ENCODE measurements at regions of chr17 and their contacts with region 1.

Region 1: GRCh38 chr17:29124117-29124924 is 55.9 kb downstream of the MYO18A start:
- DNase-seq: no peak
- ATAC-seq: peak; percentile 97
- H3K4me3 ChIP-seq: no peak overlapping the region
- H3K27ac ChIP-seq: no peak overlapping the region
- H3K4me1 ChIP-seq: no peaks in the 10 kb centered on the region
- H3K27me3 ChIP-seq: no peaks in the 10 kb centered on the region
- CTCF ChIP-seq: peak; percentile 71 to 97 (median 72); a peak in 5 of 6 replicates
- EP300 ChIP-seq: no peak
- POLR2A ChIP-seq: no peak
- RAD21 ChIP-seq: peak; percentile 86

Region 2: GRCh38 chr17:28960256-28961061 is 163.9 kb before region 1 on chr17:
- CTCF ChIA-PET with region 1: interaction called, 415 read pairs
- POLR2A ChIA-PET with region 1: no interaction called
- RAD21 ChIA-PET with region 1: interaction called, 10 read pairs
- SMC1A ChIA-PET with region 1: interaction called, 4 read pairs
- in situ Hi-C with region 1: loop called (anchors 5 kb)
- intact Hi-C with region 1: no loop called
- DNase-seq: no peak
- ATAC-seq: no peak
- H3K4me3 ChIP-seq: no peak overlapping the region
- H3K27ac ChIP-seq: no peak overlapping the region
- H3K4me1 ChIP-seq: no peaks in the 10 kb centered on the region
- H3K27me3 ChIP-seq: peaks cover 0 to 2% of the 10 kb centered on the region in 2 experiments; a peak in 1 of 4 replicates
- CTCF ChIP-seq: no peak
- EP300 ChIP-seq: no peak
- POLR2A ChIP-seq: no peak
- RAD21 ChIP-seq: no peak

Region 3: GRCh38 chr17:29140051-29140621 is 15.8 kb after region 1 on chr17:
- CTCF ChIA-PET with region 1: interaction called, 371 read pairs
- POLR2A ChIA-PET with region 1: interaction called, 4 read pairs
- RAD21 ChIA-PET with region 1: interaction called, 143 read pairs
- SMC1A ChIA-PET with region 1: interaction called, 67 read pairs
- in situ Hi-C with region 1: no loop called
- intact Hi-C with region 1: loop called (anchors 1 kb)
- DNase-seq: no peak
- ATAC-seq: peak; percentile 82
- H3K4me3 ChIP-seq: peak overlapping the region; percentile 81
- H3K27ac ChIP-seq: peak overlapping the region; percentile 76
- H3K4me1 ChIP-seq: peaks cover 31% of the 10 kb centered on the region
- H3K27me3 ChIP-seq: no peaks in the 10 kb centered on the region
- CTCF ChIP-seq: no peak
- EP300 ChIP-seq: no peak
- POLR2A ChIP-seq: peak; percentile 81
- RAD21 ChIP-seq: no peak

Region 4: DNA sequence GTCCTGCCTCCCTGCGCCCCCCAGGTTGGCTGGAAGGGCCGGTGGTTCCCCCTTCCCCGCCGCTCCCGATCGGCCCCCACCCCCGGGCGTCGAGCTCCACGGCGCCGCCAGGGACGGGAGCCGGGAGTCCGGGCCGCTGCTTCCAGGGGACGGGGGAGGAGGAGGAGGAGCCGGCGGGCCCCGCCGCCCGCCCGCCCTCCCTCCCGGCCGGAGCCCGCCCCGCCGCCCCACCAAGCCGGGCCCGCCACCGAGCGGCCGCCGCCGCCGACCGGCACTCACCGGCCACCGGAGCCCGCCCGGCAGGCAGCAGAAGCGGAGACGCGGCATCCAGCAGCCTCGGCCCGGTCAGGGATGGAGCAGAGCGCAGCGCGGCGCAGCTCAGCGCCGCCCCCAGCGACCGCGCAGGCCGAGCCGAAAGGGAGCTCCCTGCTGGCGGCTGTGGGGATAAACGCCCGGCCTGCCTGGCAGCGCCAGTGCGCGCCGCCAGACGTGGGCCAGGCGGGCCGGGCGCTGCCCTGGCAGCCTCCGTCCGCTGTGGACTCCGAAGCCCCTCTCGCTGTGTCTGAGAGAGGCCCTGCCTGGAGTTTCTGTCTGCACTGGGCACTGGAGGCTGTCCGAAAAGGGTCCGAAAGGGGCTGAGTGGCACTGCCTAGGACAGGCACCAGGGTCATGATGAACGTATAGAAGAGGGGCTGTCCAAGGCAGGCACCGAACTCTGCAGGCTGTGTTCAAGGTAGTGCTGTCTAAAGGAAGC is 55.9 kb after region 1 on chr17 and contains the start of gene MYO18A:
- CTCF ChIA-PET with region 1: interaction called, 18 read pairs
- POLR2A ChIA-PET with region 1: no interaction called
- RAD21 ChIA-PET with region 1: interaction called, 12 read pairs
- SMC1A ChIA-PET with region 1: interaction called, 9 read pairs
- in situ Hi-C with region 1: no loop called
- intact Hi-C with region 1: no loop called
- DNase-seq: no peak
- ATAC-seq: peak; percentile 93
- H3K4me3 ChIP-seq: peak within 1 kb of the TSS; percentile 72; the same call in 1 of the 2 replicates
- H3K27ac ChIP-seq: no peak within 1 kb of the TSS
- H3K4me1 ChIP-seq: peaks cover 17% of the 10 kb centered on the region
- H3K27me3 ChIP-seq: no peaks in the 10 kb centered on the region
- CTCF ChIP-seq: peak; percentile 87 to 98 (median 89); a peak in 5 of 6 replicates
- EP300 ChIP-seq: no peak
- POLR2A ChIP-seq: peak; percentile 64
- RAD21 ChIP-seq: peak; percentile 58
- polyA plus RNA-seq, gene MYO18A: 2.9 to 3.9 TPM

Region 5: DNA sequence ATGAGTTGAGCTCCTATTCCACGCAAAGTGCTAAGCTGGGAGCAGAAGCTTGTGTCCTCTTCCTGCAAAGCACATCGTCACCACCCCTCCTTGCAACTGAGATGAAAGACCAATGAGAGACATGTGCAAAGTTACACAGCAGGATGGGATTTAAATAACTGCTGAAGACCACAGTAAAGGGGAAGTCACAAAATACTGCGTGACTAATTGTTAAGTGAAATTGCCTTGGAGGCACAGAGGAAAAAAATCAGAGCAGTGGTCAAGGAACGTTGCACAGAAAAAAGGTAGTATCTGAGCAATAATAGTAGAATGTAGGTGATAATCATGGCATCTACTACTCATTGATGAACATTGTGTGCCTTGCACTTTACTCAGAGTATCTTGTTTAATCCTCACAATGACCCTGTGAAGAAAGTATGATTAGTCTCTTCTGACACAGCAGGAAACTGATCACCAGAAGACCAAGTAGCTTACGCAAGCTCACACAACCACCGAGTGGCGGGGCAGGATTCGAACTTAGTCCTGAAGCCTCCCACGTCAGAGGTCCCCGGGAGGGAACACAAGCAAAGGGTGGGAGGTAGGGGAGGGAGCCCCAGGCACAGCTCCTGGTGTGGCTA is 71.3 kb after region 1 on chr17:
- CTCF ChIA-PET with region 1: interaction called, 18 read pairs
- POLR2A ChIA-PET with region 1: no interaction called
- RAD21 ChIA-PET with region 1: interaction called, 5 read pairs
- SMC1A ChIA-PET with region 1: interaction called, 6 read pairs
- in situ Hi-C with region 1: no loop called
- intact Hi-C with region 1: no loop called
- DNase-seq: no peak
- ATAC-seq: peak; percentile 88
- H3K4me3 ChIP-seq: 0 out of 2 replicates have a peak overlapping the region, but pooled peaks have one; percentile 5
- H3K27ac ChIP-seq: peak overlapping the region; percentile 15; the same call in 1 of the 2 replicates
- H3K4me1 ChIP-seq: peaks cover 15% of the 10 kb centered on the region
- H3K27me3 ChIP-seq: no peaks in the 10 kb centered on the region
- CTCF ChIP-seq: no peak
- EP300 ChIP-seq: no peak; a peak in 1 of 4 replicates
- POLR2A ChIP-seq: no peak
- RAD21 ChIP-seq: no peak

Region 6: GRCh38 chr17:29293890-29294579 is 169.7 kb after region 1 on chr17 and contains the start of gene NUFIP2:
- CTCF ChIA-PET with region 1: interaction called, 25 read pairs
- POLR2A ChIA-PET with region 1: no interaction called
- RAD21 ChIA-PET with region 1: interaction called, 12 read pairs
- SMC1A ChIA-PET with region 1: interaction called, 10 read pairs
- in situ Hi-C with region 1: no loop called
- intact Hi-C with region 1: no loop called
- DNase-seq: peak; percentile 95
- ATAC-seq: peak; percentile 94
- H3K4me3 ChIP-seq: peak within 1 kb of the TSS; percentile 89
- H3K27ac ChIP-seq: peak within 1 kb of the TSS; percentile 97
- H3K4me1 ChIP-seq: peaks cover 2% of the 10 kb centered on the region; the same call in 1 of the 2 replicates
- H3K27me3 ChIP-seq: no peaks in the 10 kb centered on the region
- CTCF ChIP-seq: no peak
- EP300 ChIP-seq: peak in 1 of 2 experiments; percentile 86; a peak in 2 of 4 replicates
- POLR2A ChIP-seq: peak; percentile 98
- RAD21 ChIP-seq: peak; percentile 3; the same call in 1 of the 2 replicates
- polyA plus RNA-seq, gene NUFIP2: 4.3 to 5.2 TPM